Ascending aorta (tissue), 2 donors: ENCODE measurements at regions of chr10 and their contacts with region 1.

Region 1: DNA sequence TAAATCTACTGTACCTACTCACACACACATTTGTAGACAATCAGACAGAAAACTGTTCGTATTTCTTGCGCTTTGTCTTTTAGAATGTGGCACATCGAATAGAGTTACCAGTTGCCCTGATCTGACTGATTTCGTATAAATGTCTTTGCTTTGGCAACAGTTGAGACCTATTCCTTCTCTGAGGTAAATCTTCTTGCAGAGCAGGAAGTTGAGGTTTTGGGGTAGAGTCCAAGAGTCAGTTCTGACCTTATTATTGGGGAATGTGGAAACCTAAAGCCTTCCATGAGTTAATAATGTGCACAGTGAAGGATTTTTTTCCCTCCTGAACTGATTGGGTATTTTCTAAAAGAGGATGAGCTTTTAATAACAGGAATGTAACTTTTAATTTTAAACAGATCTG is 135.3 kb downstream of the KIAA1217 start:
- DNase-seq: no peak
- H3K4me3 ChIP-seq: peak overlapping the region in 1 of 2 donors; percentile 51
- H3K27ac ChIP-seq: peak overlapping the region; percentile 78 to 81
- H3K4me1 ChIP-seq: peaks cover 3 to 27% of the 10 kb centered on the region in 2 donors
- H3K27me3 ChIP-seq: no peaks in the 10 kb centered on the region
- CTCF ChIP-seq: no peak

Region 2: DNA sequence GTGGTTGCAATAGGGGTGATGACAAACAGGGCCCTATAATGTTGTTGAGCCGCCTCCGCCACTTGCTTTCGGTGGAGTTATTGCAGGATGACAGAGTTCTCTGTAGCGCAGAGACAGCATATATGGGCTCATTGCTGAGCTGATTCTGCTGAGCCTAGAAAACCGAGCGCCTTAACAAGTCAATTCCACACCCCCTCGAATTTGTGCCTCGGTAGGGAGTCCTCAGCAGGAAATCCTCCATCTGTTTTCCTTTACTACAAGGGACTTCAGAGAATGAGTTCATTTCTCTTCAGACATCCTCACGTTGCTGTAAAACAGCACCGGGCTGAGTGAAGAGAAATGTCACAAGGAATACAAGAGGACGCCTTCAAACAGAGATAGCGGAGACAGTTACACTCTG is 226.0 kb before region 1 on chr10:
- intact Hi-C with region 1: no loop called
- DNase-seq: no peak
- H3K4me3 ChIP-seq: peak overlapping the region; percentile 18 to 42
- H3K27ac ChIP-seq: no peak overlapping the region
- H3K4me1 ChIP-seq: no peaks in the 10 kb centered on the region
- H3K27me3 ChIP-seq: no peaks in the 10 kb centered on the region
- CTCF ChIP-seq: no peak

Region 3: GRCh38 chr10:24299578-24300260 is 44.6 kb before region 1 on chr10:
- intact Hi-C with region 1: loop called (anchors 10 kb)
- DNase-seq: peak in 1 of 2 donors; percentile 4
- H3K4me3 ChIP-seq: no peak overlapping the region
- H3K27ac ChIP-seq: no peak overlapping the region
- H3K4me1 ChIP-seq: peaks cover 0 to 7% of the 10 kb centered on the region in 2 donors
- H3K27me3 ChIP-seq: no peaks in the 10 kb centered on the region
- CTCF ChIP-seq: no peak